Ascending aorta (tissue), 2 donors: ENCODE measurements at regions of chr14 and their contacts with region 1.

Region 1: GRCh38 chr14:69242311-69243224 is 17.4 kb upstream of the GALNT16 start:
- DNase-seq: peak in 1 of 2 donors; percentile 85
- H3K4me3 ChIP-seq: peak overlapping the region in 1 of 2 donors; percentile 50
- H3K27ac ChIP-seq: peak overlapping the region; percentile 15 to 66
- H3K4me1 ChIP-seq: no peaks in the 10 kb centered on the region
- H3K27me3 ChIP-seq: no peaks in the 10 kb centered on the region
- CTCF ChIP-seq: peak; percentile 84 to 88 (median 86)

Region 2: GRCh38 chr14:69287098-69288010 is 44.8 kb after region 1 on chr14:
- intact Hi-C with region 1: loop called (anchors 1 kb)
- DNase-seq: no peak
- H3K4me3 ChIP-seq: no peak overlapping the region
- H3K27ac ChIP-seq: peak overlapping the region; percentile 61 to 63
- H3K4me1 ChIP-seq: peaks cover 6 to 11% of the 10 kb centered on the region in 2 donors
- H3K27me3 ChIP-seq: no peaks in the 10 kb centered on the region
- CTCF ChIP-seq: peak in 1 of 3 experiments; percentile 4

Region 3: GRCh38 chr14:69363055-69363454 is 120.5 kb after region 1 on chr14:
- intact Hi-C with region 1: loop called (anchors 2 kb)
- DNase-seq: peak in 1 of 2 donors; percentile 63
- H3K4me3 ChIP-seq: no peak overlapping the region
- H3K27ac ChIP-seq: no peak overlapping the region
- H3K4me1 ChIP-seq: no peaks in the 10 kb centered on the region
- H3K27me3 ChIP-seq: no peaks in the 10 kb centered on the region
- CTCF ChIP-seq: peak; percentile 39 to 57 (median 40)

Region 4: GRCh38 chr14:69460093-69460701 is 217.6 kb after region 1 on chr14:
- intact Hi-C with region 1: loop called (anchors 1 kb)
- DNase-seq: peak in 1 of 2 donors; percentile 81
- H3K4me3 ChIP-seq: no peak overlapping the region
- H3K27ac ChIP-seq: no peak overlapping the region
- H3K4me1 ChIP-seq: no peaks in the 10 kb centered on the region
- H3K27me3 ChIP-seq: no peaks in the 10 kb centered on the region
- CTCF ChIP-seq: peak; percentile 62 to 79 (median 71)

Region 5: DNA sequence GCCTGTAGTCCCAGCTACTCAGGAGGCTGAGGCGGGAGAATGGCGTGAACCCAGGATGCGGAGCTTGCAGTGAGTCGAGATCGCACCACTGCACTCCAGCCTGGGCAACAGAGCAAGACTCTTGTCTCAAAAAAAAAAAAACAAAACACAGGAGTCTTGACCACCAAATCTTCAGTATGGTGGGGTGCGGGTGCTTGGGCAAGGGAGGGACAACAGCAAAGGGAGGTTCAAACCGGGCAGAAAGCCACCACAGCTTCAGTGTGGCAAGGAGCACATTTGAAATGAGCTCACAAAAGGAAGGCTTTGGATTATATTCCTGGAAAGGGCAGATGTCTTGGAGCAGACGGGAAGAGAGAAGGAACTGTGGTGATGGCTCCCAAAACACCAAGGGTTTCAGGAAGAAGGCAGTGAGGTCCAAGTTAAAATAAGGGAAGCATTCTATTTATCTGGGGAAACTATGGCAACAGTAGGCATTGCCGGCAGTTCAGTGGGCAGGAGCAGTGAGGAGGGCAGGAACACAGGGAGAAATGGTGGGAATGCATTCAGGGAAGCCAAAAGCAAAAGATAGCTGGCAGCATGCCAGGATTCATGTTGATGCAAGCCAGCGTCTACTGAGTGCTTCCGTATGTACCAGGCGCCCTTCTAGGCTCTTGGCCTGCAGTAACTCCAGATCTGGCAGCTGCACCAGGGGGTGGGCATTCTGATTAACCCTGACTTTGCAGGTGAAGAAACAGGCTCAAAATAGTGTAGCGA is 473.3 kb after region 1 on chr14:
- intact Hi-C with region 1: no loop called
- DNase-seq: peak in 1 of 2 donors; percentile 91
- H3K4me3 ChIP-seq: peak overlapping the region in 1 of 2 donors; percentile 3
- H3K27ac ChIP-seq: peak overlapping the region; percentile 57 to 73
- H3K4me1 ChIP-seq: peaks cover 15 to 39% of the 10 kb centered on the region in 2 donors
- H3K27me3 ChIP-seq: no peaks in the 10 kb centered on the region
- CTCF ChIP-seq: no peak